Esophagus muscularis mucosa (tissue), 4 donors: ENCODE measurements at regions of chr6 and their contacts with region 1.

Region 1: DNA sequence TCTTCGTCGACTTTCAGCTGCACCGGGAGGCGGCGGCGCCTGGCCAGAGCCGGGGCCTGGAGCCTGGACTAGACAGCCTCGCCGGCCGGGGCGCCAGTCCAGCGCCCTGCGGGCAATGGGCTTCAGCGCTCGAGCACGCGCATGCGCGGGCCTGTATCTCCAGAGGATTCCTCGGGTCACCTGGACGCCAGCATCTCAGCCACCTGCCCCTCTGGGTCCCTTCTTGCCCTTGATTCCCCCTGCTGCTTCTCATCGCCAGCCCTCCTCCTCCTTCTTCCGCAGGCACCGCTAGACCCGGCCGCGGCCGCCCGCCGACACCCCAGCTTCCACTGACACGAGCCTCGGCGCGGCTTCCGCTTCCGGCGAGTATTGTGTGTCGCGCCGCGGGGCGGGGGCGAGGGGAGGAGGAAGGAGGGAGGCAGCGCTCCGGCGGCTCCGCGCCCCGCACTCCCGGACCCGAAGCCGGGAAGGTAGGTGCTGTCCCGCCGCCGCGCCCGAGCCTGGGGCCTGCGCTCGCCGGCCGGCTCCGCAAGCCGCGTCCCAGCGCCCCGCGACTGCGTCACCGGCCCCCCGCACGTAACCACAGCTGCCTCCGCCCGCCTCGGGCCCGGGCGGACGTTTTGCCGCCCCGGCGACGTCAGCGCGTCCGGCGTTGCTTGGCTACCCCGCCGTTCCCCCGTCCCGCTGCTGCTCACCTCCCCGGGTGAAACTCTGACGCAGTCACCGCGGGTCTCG is at the start of gene TRIM39:
- DNase-seq: peak; percentile 98
- H3K4me3 ChIP-seq: peak within 1 kb of the TSS; percentile 79 to 88 (median 84)
- H3K27ac ChIP-seq: peak within 1 kb of the TSS; percentile 95 to 97 (median 96)
- H3K4me1 ChIP-seq: peaks cover 21 to 47% (median 40%) of the 10 kb centered on the region in 4 donors
- H3K27me3 ChIP-seq: no peaks in the 10 kb centered on the region
- CTCF ChIP-seq: peak in 1 of 3 experiments; percentile 8
- EP300 ChIP-seq: no peak
- POLR2A ChIP-seq: peak; percentile 55
- total RNA-seq, gene TRIM39: 17.4 to 24.5 (median 20.9) TPM

Region 2: GRCh38 chr6:30212865-30213666 is 113.6 kb before region 1 on chr6 and contains the start of gene TRIM26:
- intact Hi-C with region 1: loop called (anchors 5 kb)
- DNase-seq: peak; percentile 99
- H3K4me3 ChIP-seq: peak within 1 kb of the TSS; percentile 66 to 99 (median 86)
- H3K27ac ChIP-seq: peak within 1 kb of the TSS; percentile 93 to 98 (median 96)
- H3K4me1 ChIP-seq: peaks cover 29 to 56% (median 52%) of the 10 kb centered on the region in 4 donors
- H3K27me3 ChIP-seq: no peaks in the 10 kb centered on the region
- CTCF ChIP-seq: no peak
- EP300 ChIP-seq: no peak
- POLR2A ChIP-seq: peak; percentile 84
- total RNA-seq, gene TRIM26: 33.6 to 58.8 (median 46.3) TPM